ENCODE measurements at regions of chr6 and their contacts with region 1.

Region 1: DNA sequence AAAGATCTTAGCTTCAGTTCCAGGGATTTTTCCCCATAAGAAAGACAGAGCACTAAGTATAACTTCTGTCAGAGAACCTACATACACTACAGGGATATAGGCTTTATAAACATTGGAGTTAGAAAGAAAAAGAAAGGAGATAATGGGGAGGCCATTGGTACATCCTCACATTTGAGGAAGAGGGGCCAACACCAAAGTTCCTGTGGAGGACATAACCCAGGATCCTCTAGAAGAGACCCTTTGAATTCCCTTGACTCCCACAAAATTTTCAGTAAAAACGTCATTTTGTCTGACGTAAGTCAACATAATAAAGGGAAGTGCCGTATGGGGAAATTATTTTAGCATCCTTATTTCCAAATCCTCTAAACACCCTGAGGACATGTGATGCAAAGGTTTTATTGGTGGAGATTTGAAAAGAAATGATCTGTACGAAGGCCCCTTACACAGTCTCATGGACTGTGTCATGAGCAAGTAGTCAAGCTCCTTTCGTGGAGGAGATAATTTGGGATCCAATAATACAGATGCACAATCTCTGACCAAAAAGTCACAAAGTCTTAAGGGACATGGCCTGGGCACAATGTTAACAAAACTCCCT is 33.2 kb downstream of the HLA-DRA start:
- DNase-seq: no peak
- ATAC-seq: no peak
- H3K4me3 ChIP-seq: no peak overlapping the region
- H3K27ac ChIP-seq: no peak overlapping the region
- H3K4me1 ChIP-seq: no peaks in the 10 kb centered on the region
- H3K27me3 ChIP-seq: peaks cover 0 to 3% (median 0%) of the 10 kb centered on the region in 3 donors
- CTCF ChIP-seq: no peak

Region 2: DNA sequence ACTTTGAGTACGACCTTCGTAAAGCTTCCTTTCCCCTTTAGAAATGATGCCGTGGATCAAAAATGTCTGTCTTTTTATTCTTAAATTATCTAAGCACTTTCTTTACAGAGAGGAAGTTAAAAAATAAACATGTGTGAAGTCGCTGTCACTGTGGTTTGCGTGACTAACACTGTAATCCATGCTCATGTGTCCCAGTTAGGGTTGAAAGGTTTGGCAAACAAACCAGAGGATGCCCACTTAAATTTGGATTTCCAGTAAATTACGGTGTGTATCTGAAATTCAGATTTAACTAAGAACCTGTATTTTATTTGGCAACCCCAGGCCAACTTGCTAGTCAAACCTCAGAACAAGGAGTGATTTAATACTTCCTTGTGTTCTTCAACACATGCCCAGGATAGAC is 95.7 kb after region 1 on chr6:
- intact Hi-C with region 1: loop called in 1 of 2 experiments (anchors 10 kb)
- DNase-seq: no peak
- ATAC-seq: no peak
- H3K4me3 ChIP-seq: no peak overlapping the region
- H3K27ac ChIP-seq: no peak overlapping the region
- H3K4me1 ChIP-seq: no peaks in the 10 kb centered on the region
- H3K27me3 ChIP-seq: no peaks in the 10 kb centered on the region
- CTCF ChIP-seq: no peak

Measured in psoas muscle (tissue), 8 donors.